AG04449 (cell line): ENCODE measurements at regions of chr6 and their contacts with region 1.

Region 1: GRCh38 chr6:111011360-111012142 is 29.7 kb downstream of the RPF2 start:
- DNase-seq: no peak
- H3K4me3 ChIP-seq: no peak overlapping the region
- CTCF ChIP-seq: peak; percentile 52

Region 2: GRCh38 chr6:110671116-110671846 is 340.3 kb before region 1 on chr6:
- CTCF ChIA-PET with region 1: no interaction called
- POLR2A ChIA-PET with region 1: no interaction called
- DNase-seq: no peak
- H3K4me3 ChIP-seq: no peak overlapping the region
- CTCF ChIP-seq: no peak

Region 3: DNA sequence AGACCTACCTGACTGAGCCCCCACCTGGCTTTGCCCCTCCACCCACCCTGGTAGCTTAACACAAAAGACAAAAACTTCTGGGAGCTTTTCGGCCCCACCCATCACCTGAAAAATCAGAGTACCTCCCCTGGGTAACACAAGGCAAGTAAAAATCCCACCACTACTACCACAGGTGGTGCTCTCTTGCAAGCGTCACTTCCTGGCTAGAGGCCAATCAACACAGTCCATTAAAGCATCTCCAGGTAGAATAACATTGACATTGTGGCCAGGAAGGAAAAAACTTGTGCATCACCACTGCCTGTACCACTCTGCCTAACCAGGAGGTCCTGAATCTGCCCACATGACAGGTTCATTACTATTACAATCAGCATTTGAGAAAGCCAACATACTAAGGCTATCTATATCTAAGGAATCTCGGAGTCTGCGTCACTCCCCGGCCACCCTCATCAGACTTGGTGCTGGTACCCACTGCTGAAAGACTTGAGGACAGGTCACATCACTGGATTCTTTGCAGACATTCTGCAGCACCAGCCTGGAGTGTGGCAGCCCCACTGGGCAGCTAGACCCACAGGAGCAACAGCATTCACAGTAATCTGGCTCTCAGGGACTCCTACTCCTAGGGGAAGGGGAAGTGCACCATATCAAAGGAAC is 322.2 kb before region 1 on chr6:
- CTCF ChIA-PET with region 1: no interaction called
- POLR2A ChIA-PET with region 1: no interaction called
- DNase-seq: no peak
- H3K4me3 ChIP-seq: no peak overlapping the region
- CTCF ChIP-seq: no peak

Region 4: DNA sequence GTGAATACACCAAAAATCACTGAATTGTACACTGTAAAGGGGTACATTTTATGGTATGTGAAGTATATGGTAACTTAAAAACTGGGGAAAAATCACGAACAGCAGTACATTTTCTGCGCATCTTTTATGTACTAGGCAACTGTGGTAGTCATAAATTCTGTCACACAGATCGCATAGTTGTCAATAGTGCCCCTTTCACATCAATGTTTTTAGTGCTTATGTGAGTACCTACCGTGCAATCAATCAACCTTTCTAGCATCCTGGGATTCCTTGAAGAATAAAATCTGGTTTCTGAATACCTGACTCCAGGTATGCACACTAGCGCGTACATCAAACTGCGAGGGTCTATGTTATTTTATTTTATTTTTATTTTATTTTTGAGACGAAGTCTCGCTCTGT is 30.4 kb before region 1 on chr6:
- CTCF ChIA-PET with region 1: interaction called, 17 read pairs
- POLR2A ChIA-PET with region 1: no interaction called
- DNase-seq: no peak
- H3K4me3 ChIP-seq: peak overlapping the region; percentile 97
- CTCF ChIP-seq: no peak

Region 5: GRCh38 chr6:110999634-111000270 is 11.8 kb before region 1 on chr6:
- CTCF ChIA-PET with region 1: interaction called, 30 read pairs
- POLR2A ChIA-PET with region 1: no interaction called
- DNase-seq: no peak
- H3K4me3 ChIP-seq: no peak overlapping the region
- CTCF ChIP-seq: no peak

Region 6: DNA sequence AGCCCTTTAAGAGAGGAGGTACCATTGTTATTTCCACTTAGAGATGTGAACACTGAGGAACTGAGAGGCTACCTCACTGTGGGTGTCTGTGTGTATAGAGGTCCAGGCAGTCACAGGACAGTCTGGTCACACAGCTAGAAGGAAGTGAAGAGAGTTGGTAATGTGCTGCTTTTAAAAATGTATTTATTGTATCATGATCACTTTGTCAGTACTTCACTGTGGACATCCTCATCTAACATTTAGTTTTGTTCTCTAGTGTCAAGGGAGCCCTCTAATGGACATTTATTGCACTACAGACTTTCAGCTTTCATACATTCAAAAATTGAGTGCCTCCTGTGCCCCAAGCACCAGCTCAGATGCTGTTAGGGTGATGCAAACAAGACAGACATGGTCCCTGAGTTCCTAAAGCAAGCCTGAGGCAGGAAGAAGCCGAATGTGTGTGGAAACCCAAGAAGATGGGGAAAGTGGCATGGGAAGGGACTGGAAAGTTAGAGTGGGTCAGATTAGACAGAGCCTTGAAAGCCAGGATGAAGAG is 198.7 kb after region 1 on chr6:
- CTCF ChIA-PET with region 1: interaction called, 67 read pairs
- POLR2A ChIA-PET with region 1: interaction called, 3 read pairs
- DNase-seq: no peak
- H3K4me3 ChIP-seq: no peak overlapping the region
- CTCF ChIP-seq: peak; percentile 56

Region 7: DNA sequence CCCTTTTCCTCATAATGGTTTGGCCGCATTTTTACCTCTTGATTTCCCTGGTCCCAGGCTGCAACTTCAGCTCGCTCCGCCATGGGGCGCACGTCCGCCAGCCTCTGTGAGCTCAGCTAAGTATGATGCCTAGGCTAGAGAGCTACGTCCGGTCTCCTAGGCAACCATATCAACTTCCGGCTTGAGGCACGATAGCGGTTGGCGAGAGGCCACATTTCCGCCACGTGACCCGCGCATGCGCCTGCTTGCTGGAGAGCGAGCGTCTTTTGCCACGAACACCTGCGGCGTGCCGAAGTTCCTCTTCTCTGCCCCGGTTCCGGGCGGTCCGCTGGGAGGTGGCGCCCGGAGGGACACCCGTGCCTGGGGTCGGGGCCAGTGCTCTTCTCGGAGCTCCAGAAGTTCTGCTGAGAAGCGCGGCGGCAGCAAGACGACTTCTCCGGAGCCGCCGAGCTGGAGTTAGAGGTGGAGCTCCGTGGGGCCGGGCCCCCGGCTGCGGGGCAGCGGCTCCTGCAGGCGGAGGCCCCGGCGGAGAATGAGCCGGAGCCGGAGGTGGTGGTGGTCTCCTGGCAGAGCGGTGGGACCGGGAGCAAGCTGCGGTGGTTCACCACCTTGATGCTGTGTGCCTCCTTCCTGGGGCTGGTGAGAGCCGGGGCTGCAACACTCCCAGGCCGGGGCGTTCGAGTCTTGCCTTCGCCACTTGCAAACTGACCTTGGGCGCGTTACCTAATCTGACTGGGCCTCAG is 247.7 kb after region 1 on chr6:
- CTCF ChIA-PET with region 1: interaction called, 19 read pairs
- POLR2A ChIA-PET with region 1: no interaction called
- DNase-seq: peak; percentile 94
- H3K4me3 ChIP-seq: peak overlapping the region; percentile 85
- CTCF ChIP-seq: peak; percentile 87